PC-9 (cell line): ENCODE measurements at regions of chr14 and their contacts with region 1.

Region 1: GRCh38 chr14:63266106-63266505 is 52.6 kb downstream of the GPHB5 start:
- DNase-seq: peak; percentile 37 to 60
- H3K4me3 ChIP-seq: no peak overlapping the region
- H3K27ac ChIP-seq: no peak overlapping the region
- H3K4me1 ChIP-seq: no peaks in the 10 kb centered on the region
- H3K27me3 ChIP-seq: peaks cover 11% of the 10 kb centered on the region; the same call in 1 of the 2 replicates
- CTCF ChIP-seq: no peak

Region 2: GRCh38 chr14:63006531-63006930 is 259.6 kb before region 1 on chr14:
- CTCF ChIA-PET with region 1: no interaction called
- POLR2A ChIA-PET with region 1: no interaction called
- intact Hi-C with region 1: no loop called
- DNase-seq: no peak
- H3K4me3 ChIP-seq: no peak overlapping the region
- H3K27ac ChIP-seq: no peak overlapping the region
- H3K4me1 ChIP-seq: no peaks in the 10 kb centered on the region
- H3K27me3 ChIP-seq: no peaks in the 10 kb centered on the region
- CTCF ChIP-seq: no peak

Region 3: GRCh38 chr14:63174760-63175211 is 91.3 kb before region 1 on chr14:
- CTCF ChIA-PET with region 1: no interaction called
- POLR2A ChIA-PET with region 1: no interaction called
- intact Hi-C with region 1: loop called (anchors 2 kb)
- DNase-seq: peak in 1 of 2 experiments; percentile 38
- H3K4me3 ChIP-seq: no peak overlapping the region
- H3K27ac ChIP-seq: no peak overlapping the region
- H3K4me1 ChIP-seq: no peaks in the 10 kb centered on the region
- H3K27me3 ChIP-seq: no peaks in the 10 kb centered on the region
- CTCF ChIP-seq: peak; percentile 64